ENCODE measurements at regions of chr16 and their contacts with region 1.

Region 1: GRCh38 chr16:65315081-65315780 is 193.4 kb upstream of the CDH11 start:
- DNase-seq: no peak
- ATAC-seq: no peak
- H3K4me3 Mint-ChIP-seq: no peak overlapping the region
- H3K27ac Mint-ChIP-seq: no peak overlapping the region
- H3K4me1 Mint-ChIP-seq: no peaks in the 10 kb centered on the region
- H3K27me3 Mint-ChIP-seq: no peaks in the 10 kb centered on the region

Region 2: GRCh38 chr16:65136681-65137080 is 178.6 kb before region 1 on chr16:
- CTCF ChIA-PET with region 1: no interaction called
- POLR2A ChIA-PET with region 1: no interaction called
- intact Hi-C with region 1: loop called in 1 of 2 experiments (anchors 10 kb)
- DNase-seq: no peak
- ATAC-seq: no peak
- H3K4me3 Mint-ChIP-seq: no peak overlapping the region
- H3K27ac Mint-ChIP-seq: no peak overlapping the region
- H3K4me1 Mint-ChIP-seq: no peaks in the 10 kb centered on the region
- H3K27me3 Mint-ChIP-seq: no peaks in the 10 kb centered on the region

Region 3: GRCh38 chr16:65285128-65286048 is 29.8 kb before region 1 on chr16:
- CTCF ChIA-PET with region 1: no interaction called
- POLR2A ChIA-PET with region 1: no interaction called
- intact Hi-C with region 1: no loop called
- DNase-seq: no peak
- ATAC-seq: no peak
- H3K4me3 Mint-ChIP-seq: no peak overlapping the region
- H3K27ac Mint-ChIP-seq: no peak overlapping the region
- H3K4me1 Mint-ChIP-seq: no peaks in the 10 kb centered on the region
- H3K27me3 Mint-ChIP-seq: no peaks in the 10 kb centered on the region

Measured in activated CD4-positive, alpha-beta T cell treated with anti-CD3 and anti-CD28 coated beads for 36 hours (primary cell).